ENCODE measurements at regions of chr9 and their contacts with region 1.

Region 1: DNA sequence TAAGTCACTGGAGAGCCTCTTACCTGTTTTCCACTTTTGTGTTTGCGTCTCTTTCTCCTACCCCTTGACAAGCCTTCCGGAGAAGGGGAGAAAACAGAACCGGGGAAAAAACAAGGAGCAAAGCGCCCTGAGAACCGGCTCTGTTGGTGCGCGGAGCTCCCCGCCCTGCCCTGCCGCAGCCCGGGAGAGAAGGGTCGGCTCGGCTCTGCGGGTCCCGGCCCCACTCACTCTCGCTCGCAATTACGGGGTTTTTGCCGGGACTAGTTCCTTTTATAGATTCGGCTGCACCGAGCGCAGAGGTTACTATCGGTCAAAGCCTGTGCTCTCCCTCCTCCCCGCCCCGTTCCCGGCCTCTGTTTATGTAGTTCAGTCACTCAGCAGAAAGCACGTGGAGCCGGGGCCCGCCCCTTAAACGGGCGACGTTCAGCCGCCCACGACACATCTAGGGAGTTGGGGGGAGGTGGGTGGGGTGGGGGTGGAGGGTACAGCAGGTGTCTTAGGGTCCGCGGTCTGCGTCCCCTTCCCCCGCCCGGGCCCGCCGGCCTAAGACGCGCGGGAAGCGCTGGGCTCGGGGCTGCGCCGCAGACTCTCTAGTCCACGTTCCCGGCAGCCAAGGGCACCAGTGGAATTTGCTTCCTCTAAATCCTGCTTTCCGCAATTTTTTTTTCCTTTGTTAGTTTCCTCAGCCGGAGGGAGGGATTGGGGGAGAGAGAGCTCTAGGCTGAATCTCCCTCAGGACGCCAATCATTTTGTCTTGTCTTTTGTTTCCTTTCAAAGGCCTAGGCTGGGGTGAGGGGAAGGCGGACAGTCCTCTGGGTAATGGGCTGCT is at the start of gene ABCA1:
- DNase-seq: peak; percentile 66
- H3K4me3 ChIP-seq: peak within 1 kb of the TSS; percentile 86
- H3K27ac ChIP-seq: peak within 1 kb of the TSS; percentile 52
- H3K27me3 ChIP-seq: no peaks in the 10 kb centered on the region
- CTCF ChIP-seq: no peak
- polyA plus RNA-seq, gene ABCA1: 27.3 and 29.6 TPM in 2 replicates

Region 2: DNA sequence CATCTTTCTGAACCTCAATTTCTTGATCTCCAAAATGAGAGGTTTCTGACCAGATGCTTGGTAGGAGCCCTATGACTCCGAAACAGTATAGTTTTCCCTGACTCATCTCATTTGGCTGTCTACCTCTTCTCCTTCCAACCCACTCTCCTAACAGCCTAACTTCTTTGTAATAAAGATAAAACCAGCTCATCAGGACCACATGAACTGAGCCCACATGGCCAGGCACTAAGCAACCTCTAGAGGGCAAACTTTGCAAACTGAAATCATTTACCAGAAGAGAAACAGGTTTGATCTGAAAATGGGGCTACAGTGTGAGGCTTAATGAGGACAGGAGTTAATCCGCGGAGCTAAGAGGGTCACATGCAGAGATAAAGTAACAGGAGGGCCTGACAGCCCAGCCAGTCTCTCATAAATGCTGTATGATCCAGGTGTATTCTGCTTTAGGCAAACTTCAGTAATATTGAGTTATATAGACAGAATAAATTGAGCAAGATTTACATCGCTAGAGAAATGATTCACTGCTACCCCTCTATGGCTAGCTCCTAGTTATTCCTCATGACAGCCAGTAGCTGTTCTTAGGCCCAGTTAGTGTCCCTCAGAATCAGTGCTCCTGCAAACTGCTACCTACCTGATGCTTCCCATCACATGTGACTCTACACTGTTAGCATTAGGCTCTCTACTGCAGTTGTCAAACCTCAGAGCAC is 64.8 kb before region 1 on chr9:
- CTCF ChIA-PET with region 1: interaction called, 15 read pairs
- POLR2A ChIA-PET with region 1: interaction called, 9 read pairs
- DNase-seq: peak; percentile 78
- H3K4me3 ChIP-seq: no peak overlapping the region
- H3K27ac ChIP-seq: peak overlapping the region; percentile 69
- H3K27me3 ChIP-seq: no peaks in the 10 kb centered on the region
- CTCF ChIP-seq: peak; percentile 89

Region 3: GRCh38 chr9:104968025-104968982 is 40.2 kb after region 1 on chr9:
- CTCF ChIA-PET with region 1: interaction called, 3 read pairs
- POLR2A ChIA-PET with region 1: interaction called, 44 read pairs
- DNase-seq: peak; percentile 85
- H3K4me3 ChIP-seq: peak overlapping the region; percentile 90
- H3K27ac ChIP-seq: peak overlapping the region; percentile 91
- H3K27me3 ChIP-seq: no peaks in the 10 kb centered on the region
- CTCF ChIP-seq: no peak

Region 4: DNA sequence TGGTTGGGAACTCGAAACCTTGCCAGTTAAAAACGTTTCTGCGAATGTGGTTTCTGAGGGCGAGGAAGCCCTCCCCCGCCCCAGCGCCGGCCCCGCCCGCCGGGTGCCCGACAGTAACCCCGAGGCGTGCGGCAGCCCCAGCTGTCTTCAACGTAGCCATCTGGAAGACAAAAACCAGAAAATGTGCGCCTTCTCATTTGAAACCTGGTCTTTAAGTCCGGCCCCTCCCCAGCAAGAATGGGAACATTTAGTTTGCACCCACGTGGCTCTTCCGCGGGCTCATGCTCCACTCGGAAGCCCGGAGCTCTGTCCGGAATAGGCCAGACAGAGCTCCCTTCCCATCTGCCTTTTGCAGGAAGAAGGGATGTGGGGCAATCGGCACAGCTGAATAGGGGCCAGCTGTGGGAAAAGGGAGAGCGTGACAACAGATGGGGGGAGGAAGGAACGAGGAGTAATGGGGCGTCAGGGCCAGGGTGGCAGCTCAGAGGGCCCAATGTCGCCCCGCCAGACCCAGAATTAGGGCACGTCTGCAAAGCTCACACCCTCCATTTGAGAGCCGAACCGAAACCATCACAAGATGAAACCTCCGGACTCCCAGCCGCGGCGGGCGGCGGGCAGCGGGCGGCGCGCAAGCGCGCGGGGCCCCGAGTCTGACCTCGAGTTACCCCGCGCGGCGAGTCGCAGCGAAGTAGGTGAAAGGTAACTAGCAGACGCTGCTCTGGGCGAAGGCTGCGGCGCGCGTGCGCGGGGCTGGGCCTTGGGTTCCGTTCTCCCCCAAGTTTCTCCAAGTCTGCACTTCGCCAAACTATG is 63.2 kb after region 1 on chr9:
- CTCF ChIA-PET with region 1: no interaction called
- POLR2A ChIA-PET with region 1: interaction called, 13 read pairs
- DNase-seq: peak; percentile 51
- H3K4me3 ChIP-seq: peak overlapping the region; percentile 81
- H3K27ac ChIP-seq: peak overlapping the region; percentile 96
- H3K27me3 ChIP-seq: no peaks in the 10 kb centered on the region
- CTCF ChIP-seq: no peak

Region 5: DNA sequence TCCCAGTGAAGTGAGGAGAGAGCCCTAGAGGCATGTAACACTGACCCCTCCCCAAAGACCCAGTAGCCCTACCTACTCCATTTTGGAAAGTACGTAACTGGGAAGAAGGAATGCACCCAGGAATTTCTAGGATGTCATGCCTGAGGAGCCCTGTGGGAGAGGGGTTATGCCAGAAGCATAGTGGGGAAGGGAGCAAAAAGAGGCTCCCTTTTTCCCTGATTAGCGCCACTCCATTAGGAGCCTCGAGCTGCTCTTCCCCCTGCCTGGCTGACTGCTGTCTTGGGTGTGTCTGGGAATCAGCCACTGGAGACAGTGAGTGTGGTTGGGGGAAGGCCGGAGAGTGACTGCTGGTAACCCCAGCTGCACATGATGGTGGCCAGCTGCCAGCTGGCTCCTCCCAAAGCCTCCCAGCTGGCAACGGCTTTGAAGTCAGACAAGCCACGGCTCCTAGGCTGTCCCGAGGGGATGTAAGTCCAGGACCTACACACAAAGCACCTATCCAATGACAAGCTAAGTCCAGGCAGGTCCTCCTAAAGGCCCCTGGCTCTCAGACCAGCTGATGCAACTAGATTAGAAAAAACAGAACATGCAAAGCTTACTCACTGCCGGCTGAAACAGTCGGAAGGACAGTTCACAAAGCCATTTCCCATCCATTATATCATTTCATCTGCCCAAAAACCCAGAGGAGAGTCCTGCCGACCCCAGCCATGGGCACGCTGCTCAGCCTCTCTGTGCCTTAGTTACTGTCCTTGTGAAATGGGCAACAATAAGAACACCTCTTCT is 136.4 kb after region 1 on chr9:
- CTCF ChIA-PET with region 1: interaction called, 3 read pairs
- POLR2A ChIA-PET with region 1: interaction called, 20 read pairs
- DNase-seq: peak; percentile 92
- H3K4me3 ChIP-seq: no peak overlapping the region
- H3K27ac ChIP-seq: peak overlapping the region; percentile 97
- H3K27me3 ChIP-seq: no peaks in the 10 kb centered on the region
- CTCF ChIP-seq: no peak

Region 6: GRCh38 chr9:105157130-105157583 is 229.0 kb after region 1 on chr9:
- CTCF ChIA-PET with region 1: interaction called, 11 read pairs
- POLR2A ChIA-PET with region 1: no interaction called
- DNase-seq: peak; percentile 42
- H3K4me3 ChIP-seq: no peak overlapping the region
- H3K27ac ChIP-seq: no peak overlapping the region
- H3K27me3 ChIP-seq: no peaks in the 10 kb centered on the region
- CTCF ChIP-seq: peak; percentile 46

Region 7: GRCh38 chr9:105414947-105415661 is 487.0 kb after region 1 on chr9:
- CTCF ChIA-PET with region 1: interaction called, 8 read pairs
- POLR2A ChIA-PET with region 1: interaction called, 10 read pairs
- DNase-seq: no peak
- H3K4me3 ChIP-seq: no peak overlapping the region
- H3K27ac ChIP-seq: no peak overlapping the region
- H3K27me3 ChIP-seq: no peaks in the 10 kb centered on the region
- CTCF ChIP-seq: peak; percentile 86

Measured in AG04450 (cell line).